ENCODE measurements at regions of chr6 and their contacts with region 1.

Region 1: GRCh38 chr6:53615633-53616449 is 49.7 kb downstream of the KLHL31 start:
- DNase-seq: peak; percentile 77 to 79
- H3K4me3 ChIP-seq: peak overlapping the region; percentile 11; the same call in 1 of the 2 replicates
- H3K4me3 Mint-ChIP-seq: peak overlapping the region; percentile 71
- H3K27ac Mint-ChIP-seq: peak overlapping the region; percentile 98
- H3K4me1 ChIP-seq: peaks cover 41% of the 10 kb centered on the region
- H3K4me1 Mint-ChIP-seq: peaks cover 54% of the 10 kb centered on the region
- H3K27me3 ChIP-seq: no peaks in the 10 kb centered on the region
- H3K27me3 Mint-ChIP-seq: no peaks in the 10 kb centered on the region
- CTCF ChIP-seq: no peak

Region 2: GRCh38 chr6:53544470-53545308 is 71.2 kb before region 1 on chr6 and contains the start of gene GCLC:
- CTCF ChIA-PET with region 1: no interaction called
- POLR2A ChIA-PET with region 1: interaction called, 7 read pairs
- intact Hi-C with region 1: loop called (anchors 1 kb)
- DNase-seq: peak; percentile 93 to 94
- H3K4me3 ChIP-seq: peak within 1 kb of the TSS; percentile 98
- H3K4me3 Mint-ChIP-seq: peak within 1 kb of the TSS; percentile 98
- H3K27ac Mint-ChIP-seq: peak within 1 kb of the TSS; percentile 94
- H3K4me1 ChIP-seq: peaks cover 14% of the 10 kb centered on the region
- H3K4me1 Mint-ChIP-seq: peaks cover 19% of the 10 kb centered on the region
- H3K27me3 ChIP-seq: no peaks in the 10 kb centered on the region
- H3K27me3 Mint-ChIP-seq: no peaks in the 10 kb centered on the region
- CTCF ChIP-seq: peak; percentile 42 to 75
- total RNA-seq, gene GCLC: 70.1 and 88.9 TPM in 2 replicates

Region 3: DNA sequence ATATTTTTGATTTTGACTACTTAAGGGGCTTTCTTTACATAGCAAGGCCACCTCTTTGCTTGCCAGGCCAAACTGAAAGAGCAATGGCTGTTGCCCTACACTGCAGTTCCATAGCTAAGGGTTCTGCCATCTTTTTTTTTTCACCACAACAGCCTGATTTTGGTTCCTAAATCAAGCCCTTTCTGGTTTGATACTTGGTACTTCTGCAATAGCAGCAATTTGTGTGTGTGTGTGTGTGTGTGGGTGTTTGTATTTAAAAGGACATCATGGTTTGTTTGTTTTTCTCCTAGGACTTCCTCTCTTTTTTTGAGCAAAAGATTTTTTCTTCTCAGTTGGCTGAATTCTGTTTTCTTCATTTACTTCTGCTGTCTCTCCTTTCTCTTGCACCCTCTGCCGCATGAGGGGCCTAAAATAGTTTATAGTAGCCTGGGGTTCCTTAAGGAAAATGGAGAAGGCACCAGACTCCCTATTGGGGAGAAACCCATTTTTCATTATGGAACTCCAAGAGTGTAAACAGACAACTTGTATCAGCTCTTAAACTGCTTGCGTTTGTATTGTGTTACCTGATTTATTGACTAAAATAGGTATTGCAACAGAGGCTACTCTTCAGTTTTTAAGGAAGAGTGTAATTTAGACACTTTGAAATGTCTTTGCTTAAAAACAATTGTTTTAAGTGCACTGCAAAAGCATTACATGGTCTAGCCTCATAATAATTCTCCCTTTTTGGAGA is 58.7 kb before region 1 on chr6:
- CTCF ChIA-PET with region 1: no interaction called
- POLR2A ChIA-PET with region 1: no interaction called
- intact Hi-C with region 1: no loop called
- DNase-seq: no peak
- H3K4me3 ChIP-seq: no peak overlapping the region
- H3K4me3 Mint-ChIP-seq: no peak overlapping the region
- H3K27ac Mint-ChIP-seq: no peak overlapping the region
- H3K4me1 ChIP-seq: no peaks in the 10 kb centered on the region
- H3K4me1 Mint-ChIP-seq: no peaks in the 10 kb centered on the region
- H3K27me3 ChIP-seq: no peaks in the 10 kb centered on the region
- H3K27me3 Mint-ChIP-seq: no peaks in the 10 kb centered on the region
- CTCF ChIP-seq: no peak

Region 4: DNA sequence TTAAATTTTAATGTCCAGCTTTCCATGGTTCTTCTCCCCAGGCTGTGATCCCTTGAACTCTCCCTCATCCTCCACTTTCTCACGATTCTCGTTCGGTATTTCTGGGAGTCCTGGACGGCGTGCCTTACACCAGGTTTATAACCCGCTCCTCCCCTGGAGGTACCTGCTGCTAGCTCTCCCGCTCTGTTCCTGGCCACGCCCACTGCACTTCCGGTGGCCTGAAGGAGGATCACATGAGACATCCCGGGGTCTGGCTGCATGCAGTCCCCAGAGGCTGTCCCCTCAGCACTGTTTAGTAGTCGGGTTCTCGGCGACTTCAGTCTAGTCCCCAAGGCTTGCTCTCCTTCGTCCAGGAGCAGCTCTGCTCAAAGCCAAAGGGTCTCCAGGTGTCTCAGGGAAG is 42.5 kb before region 1 on chr6:
- CTCF ChIA-PET with region 1: no interaction called
- POLR2A ChIA-PET with region 1: no interaction called
- intact Hi-C with region 1: no loop called
- DNase-seq: no peak
- H3K4me3 ChIP-seq: no peak overlapping the region
- H3K4me3 Mint-ChIP-seq: no peak overlapping the region
- H3K27ac Mint-ChIP-seq: no peak overlapping the region
- H3K4me1 ChIP-seq: 0 out of 2 replicates have a peak, but pooled peaks cover 3% of the 10 kb centered on the region
- H3K4me1 Mint-ChIP-seq: no peaks in the 10 kb centered on the region
- H3K27me3 ChIP-seq: no peaks in the 10 kb centered on the region
- H3K27me3 Mint-ChIP-seq: no peaks in the 10 kb centered on the region
- CTCF ChIP-seq: no peak

Region 5: GRCh38 chr6:53605543-53606235 is 10.2 kb before region 1 on chr6:
- CTCF ChIA-PET with region 1: no interaction called
- POLR2A ChIA-PET with region 1: interaction called, 4 read pairs
- intact Hi-C with region 1: loop called (anchors 1 kb)
- DNase-seq: peak; percentile 48 to 55
- H3K4me3 ChIP-seq: no peak overlapping the region
- H3K4me3 Mint-ChIP-seq: peak overlapping the region; percentile 38
- H3K27ac Mint-ChIP-seq: peak overlapping the region; percentile 87
- H3K4me1 ChIP-seq: peaks cover 26% of the 10 kb centered on the region
- H3K4me1 Mint-ChIP-seq: peaks cover 27% of the 10 kb centered on the region
- H3K27me3 ChIP-seq: no peaks in the 10 kb centered on the region
- H3K27me3 Mint-ChIP-seq: no peaks in the 10 kb centered on the region
- CTCF ChIP-seq: no peak

Region 6: GRCh38 chr6:53634184-53634631 is 18.4 kb after region 1 on chr6:
- CTCF ChIA-PET with region 1: no interaction called
- POLR2A ChIA-PET with region 1: interaction called, 4 read pairs
- intact Hi-C with region 1: loop called (anchors 1 kb)
- DNase-seq: peak in 1 of 2 experiments; percentile 65
- H3K4me3 ChIP-seq: no peak overlapping the region
- H3K4me3 Mint-ChIP-seq: peak overlapping the region; percentile 62
- H3K27ac Mint-ChIP-seq: peak overlapping the region; percentile 96
- H3K4me1 ChIP-seq: peaks cover 47% of the 10 kb centered on the region
- H3K4me1 Mint-ChIP-seq: peaks cover 27% of the 10 kb centered on the region
- H3K27me3 ChIP-seq: no peaks in the 10 kb centered on the region
- H3K27me3 Mint-ChIP-seq: no peaks in the 10 kb centered on the region
- CTCF ChIP-seq: no peak

Measured in Caco-2 (cell line).